Activated CD8-positive, alpha-beta T cell treated with anti-CD3 and anti-CD28 coated beads for 36 hours (primary cell): ENCODE measurements at regions of chr1 and their contacts with region 1.

Region 1: DNA sequence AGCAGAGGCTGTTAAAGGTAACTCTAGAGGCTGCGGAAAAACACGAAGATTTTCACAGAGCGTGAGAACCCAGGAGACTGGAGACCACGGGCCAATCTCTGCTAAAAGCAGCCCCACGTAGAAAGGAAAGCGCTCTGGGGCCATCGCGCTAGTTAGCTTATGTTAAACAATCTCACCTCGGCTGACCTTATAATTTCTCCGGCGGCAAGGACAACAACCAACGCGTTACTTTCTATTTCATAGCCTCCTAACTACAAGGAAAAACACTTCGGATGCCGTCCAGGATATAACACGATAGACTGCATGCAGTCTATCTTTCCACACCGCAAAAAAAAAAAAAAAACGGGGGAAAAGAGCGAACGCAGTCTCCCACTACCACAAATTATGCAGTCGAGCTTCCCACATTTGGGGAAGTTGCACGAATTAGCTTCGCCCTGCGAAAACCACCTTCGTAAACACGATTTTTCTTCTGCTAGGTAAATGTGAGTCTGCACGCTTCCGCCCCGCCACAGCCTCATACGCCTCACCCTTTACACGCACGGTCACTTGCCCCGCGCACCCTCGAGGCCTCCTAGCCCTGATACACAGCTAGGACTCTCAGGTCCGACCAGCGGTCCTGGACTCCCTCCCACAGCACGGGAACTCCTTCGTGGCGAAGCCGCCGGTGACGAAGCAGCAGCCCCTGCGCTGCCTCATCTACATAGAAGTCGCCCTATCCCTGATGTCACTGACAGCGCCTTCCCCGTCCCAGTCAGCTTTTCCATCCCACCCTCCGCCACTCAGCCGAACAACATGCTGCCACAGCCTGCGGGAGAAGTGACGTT is 87.8 kb downstream of the PRKAB2 start:
- DNase-seq: peak; percentile 95
- ATAC-seq: peak; percentile 82
- H3K4me3 Mint-ChIP-seq: peak overlapping the region; percentile 86
- H3K27ac Mint-ChIP-seq: peak overlapping the region; percentile 100
- H3K4me1 Mint-ChIP-seq: peaks cover 44% of the 10 kb centered on the region
- H3K27me3 Mint-ChIP-seq: peaks cover 37% of the 10 kb centered on the region
- CTCF ChIP-seq: no peak

Region 2: DNA sequence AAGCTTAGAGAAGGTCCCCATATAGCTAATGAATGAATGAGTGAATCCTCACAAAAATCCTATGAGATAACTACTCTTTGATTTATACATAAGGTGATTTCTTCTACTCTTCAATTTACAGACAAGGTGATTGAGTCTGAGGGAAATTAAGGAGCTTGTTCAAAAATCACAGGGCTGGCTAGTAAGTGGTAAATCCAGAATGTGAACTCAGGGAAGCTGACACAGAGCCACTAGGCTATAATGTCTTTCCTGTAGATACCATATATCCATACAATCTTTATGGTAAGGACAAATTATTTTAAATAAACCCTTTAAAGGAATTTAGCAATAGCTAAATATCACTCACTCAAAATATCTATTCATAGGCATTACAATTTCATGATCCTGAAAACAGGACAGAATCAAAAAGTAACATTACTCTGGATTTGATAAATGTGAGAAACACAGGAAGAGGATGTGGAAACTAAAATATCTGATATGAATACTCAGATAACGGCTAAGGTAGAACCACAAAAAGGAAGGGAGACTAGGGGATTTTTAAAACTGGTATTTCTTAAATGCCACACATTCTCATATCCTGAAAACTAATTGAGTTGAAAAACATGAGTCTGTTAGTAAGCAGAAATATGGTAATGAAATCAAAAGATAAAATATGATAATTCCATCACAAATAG is 38.2 kb before region 1 on chr1:
- CTCF ChIA-PET with region 1: no interaction called
- POLR2A ChIA-PET with region 1: interaction called, 55 read pairs
- intact Hi-C with region 1: no loop called
- DNase-seq: no peak
- ATAC-seq: peak; percentile 75
- H3K4me3 Mint-ChIP-seq: peak overlapping the region; percentile 52
- H3K27ac Mint-ChIP-seq: peak overlapping the region; percentile 96
- H3K4me1 Mint-ChIP-seq: peaks cover 47% of the 10 kb centered on the region
- H3K27me3 Mint-ChIP-seq: no peaks in the 10 kb centered on the region
- CTCF ChIP-seq: no peak

Region 3: GRCh38 chr1:147109041-147109440 is 24.6 kb after region 1 on chr1:
- CTCF ChIA-PET with region 1: no interaction called
- POLR2A ChIA-PET with region 1: interaction called, 11 read pairs
- intact Hi-C with region 1: no loop called
- DNase-seq: peak; percentile 18
- ATAC-seq: peak; percentile 70
- H3K4me3 Mint-ChIP-seq: no peak overlapping the region
- H3K27ac Mint-ChIP-seq: no peak overlapping the region
- H3K4me1 Mint-ChIP-seq: peaks cover 8% of the 10 kb centered on the region
- H3K27me3 Mint-ChIP-seq: peaks cover 19% of the 10 kb centered on the region
- CTCF ChIP-seq: no peak

Region 4: GRCh38 chr1:147242439-147243227 is 158.1 kb after region 1 on chr1 and contains the start of gene CHD1L:
- CTCF ChIA-PET with region 1: interaction called, 5 read pairs
- POLR2A ChIA-PET with region 1: interaction called, 47 read pairs
- intact Hi-C with region 1: loop called (anchors 10 kb)
- DNase-seq: peak; percentile 96
- ATAC-seq: peak; percentile 91
- H3K4me3 Mint-ChIP-seq: peak within 1 kb of the TSS; percentile 76
- H3K27ac Mint-ChIP-seq: peak within 1 kb of the TSS; percentile 84
- H3K4me1 Mint-ChIP-seq: peaks cover 39% of the 10 kb centered on the region
- H3K27me3 Mint-ChIP-seq: no peaks in the 10 kb centered on the region
- CTCF ChIP-seq: peak; percentile 74
- total RNA-seq, gene CHD1L: 80.5 to 81.1 TPM

Region 5: DNA sequence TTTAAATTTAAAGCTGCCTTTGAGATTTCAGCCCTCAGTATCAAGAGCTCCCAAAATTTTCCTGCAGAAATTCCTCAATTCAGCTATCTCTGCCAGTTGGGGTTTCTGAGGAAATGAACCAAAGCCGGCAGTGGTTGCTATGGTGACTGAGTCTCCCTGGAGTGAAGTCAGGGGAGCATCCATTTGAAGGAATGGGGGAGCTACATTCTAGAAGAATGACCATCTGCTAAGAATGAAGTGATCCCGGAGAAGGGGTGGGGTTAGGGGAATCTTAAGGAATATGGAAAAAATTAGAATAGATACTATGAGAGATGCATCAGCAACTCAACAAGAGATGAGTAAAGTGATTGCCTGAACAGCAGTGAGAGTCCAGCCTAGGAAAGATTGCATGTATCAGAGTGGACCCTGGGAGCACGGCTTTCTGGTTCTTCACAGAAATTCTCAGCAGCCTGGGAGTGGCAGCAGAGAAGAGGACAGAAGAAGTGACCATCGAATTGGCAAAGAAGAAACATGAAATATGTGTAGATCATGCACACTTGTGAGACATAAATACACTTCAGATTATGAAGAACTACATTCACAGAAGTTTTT is 252.7 kb after region 1 on chr1:
- CTCF ChIA-PET with region 1: no interaction called
- POLR2A ChIA-PET with region 1: no interaction called
- intact Hi-C with region 1: no loop called
- DNase-seq: no peak
- ATAC-seq: no peak
- H3K4me3 Mint-ChIP-seq: no peak overlapping the region
- H3K27ac Mint-ChIP-seq: no peak overlapping the region
- H3K4me1 Mint-ChIP-seq: no peaks in the 10 kb centered on the region
- H3K27me3 Mint-ChIP-seq: peaks cover 35% of the 10 kb centered on the region
- CTCF ChIP-seq: no peak